Activated CD4-positive, alpha-beta T cell treated with anti-CD3 and anti-CD28 coated beads, Interleukin-2, amount 10 ng/mL, durations not matched to agents 24 days and 14 days (primary cell): ENCODE measurements at regions of chr9 and their contacts with region 1.

Region 1: DNA sequence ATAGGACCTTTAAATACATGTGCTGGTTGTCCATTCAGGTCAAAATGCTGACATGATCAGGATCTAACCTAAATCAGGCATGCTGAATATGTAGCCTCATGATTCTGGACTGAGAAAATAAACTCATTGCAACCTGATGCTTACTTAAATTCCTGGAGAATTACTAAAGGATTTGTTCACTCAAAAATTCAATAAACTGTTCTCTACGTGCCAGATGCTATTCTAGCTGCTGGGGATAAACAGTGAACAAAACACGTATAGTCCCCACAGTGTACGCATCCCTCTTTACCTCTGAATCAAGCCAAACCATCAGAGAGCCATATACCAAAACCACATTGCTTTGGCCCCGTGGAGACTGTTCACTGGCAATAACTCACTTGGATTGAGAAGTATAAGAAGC is 6.1 kb downstream of the SCAI start:
- DNase-seq: no peak
- H3K4me3 Mint-ChIP-seq: no peak overlapping the region
- H3K27ac Mint-ChIP-seq: no peak overlapping the region
- H3K4me1 Mint-ChIP-seq: peaks cover 24% of the 10 kb centered on the region
- H3K27me3 Mint-ChIP-seq: no peaks in the 10 kb centered on the region

Region 2: GRCh38 chr9:124980429-124980828 is 156.8 kb before region 1 on chr9:
- intact Hi-C with region 1: no loop called
- DNase-seq: no peak
- H3K4me3 Mint-ChIP-seq: no peak overlapping the region
- H3K27ac Mint-ChIP-seq: no peak overlapping the region
- H3K4me1 Mint-ChIP-seq: peaks cover 2% of the 10 kb centered on the region
- H3K27me3 Mint-ChIP-seq: no peaks in the 10 kb centered on the region

Region 3: DNA sequence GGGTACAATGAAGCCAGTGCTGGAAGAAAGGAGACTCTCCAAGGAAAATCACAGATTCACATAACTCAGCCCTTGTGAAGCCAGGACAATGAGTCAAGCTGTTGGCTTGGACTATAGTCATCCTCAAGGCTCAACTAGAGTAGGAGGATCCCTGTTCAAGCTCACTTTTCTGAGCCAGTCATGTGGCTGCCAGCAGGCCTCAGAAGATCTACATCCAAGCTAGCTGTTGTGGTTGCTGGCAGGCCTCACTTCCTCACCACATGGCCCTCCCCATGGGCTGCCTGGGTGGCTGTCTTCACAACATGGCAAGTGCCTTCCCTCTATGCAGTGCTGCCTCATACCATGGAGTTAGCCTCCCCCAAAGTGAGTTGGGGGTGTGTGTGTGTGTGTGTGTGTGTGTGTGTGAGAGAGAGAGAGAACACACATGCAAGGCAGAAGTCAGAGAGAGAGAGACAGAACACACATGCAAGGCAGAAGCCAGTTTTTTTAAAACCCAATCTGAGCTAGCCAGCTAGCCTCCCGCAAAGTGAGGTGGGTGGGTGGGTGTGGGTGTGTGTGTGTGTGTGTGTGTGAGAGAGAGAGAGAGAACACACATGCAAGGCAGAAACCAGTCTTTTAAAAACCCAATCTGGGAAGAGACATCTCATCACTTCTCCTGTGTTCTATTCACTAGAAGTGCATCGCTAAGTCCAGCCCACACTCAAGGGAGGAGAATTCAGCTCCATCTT is 11.0 kb before region 1 on chr9:
- intact Hi-C with region 1: loop called (anchors 1 kb)
- DNase-seq: peak; percentile 94
- H3K4me3 Mint-ChIP-seq: peak overlapping the region; percentile 78
- H3K27ac Mint-ChIP-seq: peak overlapping the region; percentile 97
- H3K4me1 Mint-ChIP-seq: peaks cover 27% of the 10 kb centered on the region
- H3K27me3 Mint-ChIP-seq: no peaks in the 10 kb centered on the region

Region 4: DNA sequence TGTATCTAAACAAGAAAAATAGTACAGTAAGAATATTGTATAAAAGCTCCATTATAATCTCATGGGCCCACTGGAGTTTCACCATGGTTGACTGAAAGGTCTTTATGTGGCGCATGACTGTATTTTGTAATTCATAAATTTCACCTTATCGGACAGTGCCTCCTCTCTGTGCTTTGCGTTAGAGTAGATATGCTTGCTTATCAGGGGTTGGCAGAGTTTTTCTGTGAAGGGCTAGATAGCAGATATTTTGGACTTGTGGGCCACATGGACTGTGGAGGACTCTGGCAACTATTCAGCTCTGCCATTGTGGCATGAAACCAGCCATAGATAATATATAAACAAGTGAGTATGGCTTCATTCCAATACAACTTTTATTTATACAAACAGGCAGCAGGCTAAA is 147.7 kb after region 1 on chr9:
- intact Hi-C with region 1: no loop called
- DNase-seq: no peak
- H3K4me3 Mint-ChIP-seq: no peak overlapping the region
- H3K27ac Mint-ChIP-seq: no peak overlapping the region
- H3K4me1 Mint-ChIP-seq: peaks cover 2% of the 10 kb centered on the region
- H3K27me3 Mint-ChIP-seq: no peaks in the 10 kb centered on the region

Region 5: DNA sequence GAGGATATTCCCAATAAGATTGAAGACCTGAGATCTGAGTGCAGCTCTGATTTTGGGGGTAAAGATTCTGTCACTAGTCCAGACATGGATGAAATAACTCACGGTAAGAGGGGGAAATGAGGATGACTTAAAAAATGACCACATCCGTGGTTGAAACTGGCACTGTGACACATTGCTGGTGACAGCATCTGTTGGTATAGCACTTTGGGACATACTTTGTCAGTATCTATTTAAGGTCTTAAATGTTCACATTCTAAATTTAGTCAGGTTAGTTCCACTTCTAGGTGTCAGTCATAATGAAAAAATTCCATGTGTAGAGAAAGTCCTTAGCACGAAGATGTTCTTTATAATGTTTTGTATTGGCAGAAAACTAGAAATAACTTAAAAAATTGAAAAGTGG is 195.3 kb after region 1 on chr9:
- intact Hi-C with region 1: loop called (anchors 10 kb)
- DNase-seq: peak; percentile 60
- H3K4me3 Mint-ChIP-seq: no peak overlapping the region
- H3K27ac Mint-ChIP-seq: peak overlapping the region; percentile 7
- H3K4me1 Mint-ChIP-seq: peaks cover 12% of the 10 kb centered on the region
- H3K27me3 Mint-ChIP-seq: no peaks in the 10 kb centered on the region